Activated naive CD4-positive, alpha-beta T cell treated with anti-CD3 and anti-CD28 coated beads for 36 hours (primary cell): ENCODE measurements at regions of chr3 and their contacts with region 1.

Region 1: DNA sequence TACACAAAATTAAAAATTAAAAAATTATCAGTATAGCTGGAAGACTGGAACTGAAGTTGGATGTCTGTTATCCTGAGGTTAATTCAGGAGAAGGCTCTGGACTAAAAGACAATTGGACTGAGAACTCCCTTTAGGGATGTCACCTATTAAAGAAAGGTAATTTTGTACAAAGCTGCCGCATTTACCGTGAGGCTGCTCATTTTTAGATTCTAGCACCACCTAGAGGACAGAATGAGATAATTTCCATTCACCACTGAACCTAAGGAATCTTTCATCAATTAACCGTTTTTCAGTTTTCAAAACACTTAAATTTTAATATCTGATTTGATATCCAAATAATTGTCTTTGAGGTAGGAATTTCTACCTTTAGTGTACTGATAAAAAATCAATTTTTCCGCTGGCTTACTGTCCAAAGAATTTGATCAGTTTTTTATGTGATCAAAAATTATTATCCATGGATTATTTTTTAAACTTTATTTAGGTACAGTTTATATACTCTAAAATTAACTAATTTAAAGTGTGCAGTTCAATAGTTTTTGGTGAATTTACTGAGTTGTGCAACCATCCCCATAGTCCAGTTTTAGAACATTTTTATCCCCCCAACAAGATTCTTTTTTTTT is 106.7 kb upstream of the TNIK start:
- DNase-seq: no peak
- H3K4me3 Mint-ChIP-seq: no peak overlapping the region
- H3K27ac Mint-ChIP-seq: no peak overlapping the region
- H3K4me1 Mint-ChIP-seq: peaks cover 9% of the 10 kb centered on the region
- H3K27me3 Mint-ChIP-seq: no peaks in the 10 kb centered on the region

Region 2: DNA sequence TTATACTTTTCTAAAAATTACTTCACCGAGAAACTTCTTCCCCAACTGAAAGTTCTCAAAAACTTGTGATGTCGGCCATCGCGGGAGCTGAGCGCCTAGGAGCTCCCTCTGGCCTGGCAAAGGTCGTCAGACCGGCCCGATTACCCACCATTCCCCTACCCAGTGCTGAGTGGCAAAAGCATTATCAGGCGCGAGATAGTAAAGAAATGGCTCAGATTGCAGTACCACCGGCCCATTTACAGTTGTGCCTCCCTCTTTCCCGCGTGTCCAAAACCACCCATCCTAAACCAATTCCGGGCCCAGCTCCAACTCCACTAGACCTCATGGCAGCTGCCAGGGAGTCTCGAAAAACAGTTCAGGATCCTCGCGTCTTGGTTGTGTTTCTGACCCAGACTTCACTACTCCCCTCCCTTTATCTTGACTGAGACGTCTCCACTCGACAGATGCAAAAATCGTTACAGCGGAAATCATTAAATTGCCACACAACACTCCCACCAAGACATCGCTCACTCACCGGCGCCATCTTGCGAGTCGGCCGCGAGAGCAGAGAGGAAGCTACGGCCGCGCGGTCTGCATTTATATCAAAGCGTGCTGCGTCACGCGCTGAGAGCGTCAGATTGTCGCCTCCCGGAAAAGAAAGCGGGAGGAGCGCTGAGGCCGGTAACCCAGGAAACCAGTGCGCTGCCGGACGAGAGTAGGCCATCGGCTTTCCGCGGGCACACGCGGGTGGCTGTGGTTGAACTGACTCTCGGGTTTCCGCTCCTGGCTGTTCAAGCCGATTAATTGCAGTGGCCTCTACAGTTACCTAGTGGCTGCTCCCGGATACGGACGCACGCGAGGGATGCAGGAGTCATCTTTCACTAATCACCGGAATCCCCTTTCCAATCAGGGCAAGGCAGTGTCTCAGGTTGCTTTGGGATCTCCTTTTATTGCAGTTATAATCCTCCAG is 697.0 kb before region 1 on chr3 and contains the start of gene RPL22L1:
- CTCF ChIA-PET with region 1: no interaction called
- intact Hi-C with region 1: loop called (anchors 10 kb)
- DNase-seq: peak; percentile 95
- H3K4me3 Mint-ChIP-seq: peak within 1 kb of the TSS; percentile 94
- H3K27ac Mint-ChIP-seq: peak within 1 kb of the TSS; percentile 98
- H3K4me1 Mint-ChIP-seq: peaks cover 14% of the 10 kb centered on the region
- H3K27me3 Mint-ChIP-seq: no peaks in the 10 kb centered on the region
- total RNA-seq, gene RPL22L1: 480 to 525 TPM

Region 3: GRCh38 chr3:170961616-170962400 is 605.1 kb before region 1 on chr3:
- CTCF ChIA-PET with region 1: interaction called, 3 read pairs
- intact Hi-C with region 1: loop called (anchors 1 kb)
- DNase-seq: peak; percentile 21
- H3K4me3 Mint-ChIP-seq: no peak overlapping the region
- H3K27ac Mint-ChIP-seq: no peak overlapping the region
- H3K4me1 Mint-ChIP-seq: no peaks in the 10 kb centered on the region
- H3K27me3 Mint-ChIP-seq: peaks cover 3% of the 10 kb centered on the region

Region 4: DNA sequence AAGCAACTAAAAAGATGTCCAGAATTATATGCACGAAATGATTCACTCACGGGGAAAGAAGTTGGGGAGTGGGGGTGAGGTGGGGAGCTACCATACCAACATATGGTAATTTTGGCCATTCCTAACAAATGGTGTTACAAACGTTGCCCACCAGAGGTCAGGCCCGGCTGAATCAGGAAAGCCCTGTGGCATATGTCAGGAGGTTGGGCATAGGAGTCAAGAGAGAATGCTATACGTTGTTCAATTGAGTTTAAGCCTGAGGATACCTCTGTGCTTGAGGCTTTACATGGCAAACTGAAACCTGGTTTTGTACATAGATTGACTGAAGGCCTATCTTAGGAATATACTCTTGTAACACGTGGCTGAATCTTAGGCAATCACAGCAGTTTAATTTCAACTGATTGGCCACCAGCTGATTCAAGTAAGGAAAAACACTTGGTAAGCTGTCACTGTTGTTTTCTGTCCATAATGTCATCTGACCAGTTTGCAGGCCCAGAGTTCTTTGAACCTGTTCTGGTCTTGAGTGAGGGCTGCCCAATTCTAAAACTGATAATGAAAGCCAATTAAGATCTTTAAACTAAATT is 517.0 kb before region 1 on chr3:
- CTCF ChIA-PET with region 1: interaction called, 13 read pairs
- intact Hi-C with region 1: loop called (anchors 1 kb)
- DNase-seq: peak; percentile 67
- H3K4me3 Mint-ChIP-seq: no peak overlapping the region
- H3K27ac Mint-ChIP-seq: no peak overlapping the region
- H3K4me1 Mint-ChIP-seq: no peaks in the 10 kb centered on the region
- H3K27me3 Mint-ChIP-seq: peaks cover 3% of the 10 kb centered on the region

Region 5: DNA sequence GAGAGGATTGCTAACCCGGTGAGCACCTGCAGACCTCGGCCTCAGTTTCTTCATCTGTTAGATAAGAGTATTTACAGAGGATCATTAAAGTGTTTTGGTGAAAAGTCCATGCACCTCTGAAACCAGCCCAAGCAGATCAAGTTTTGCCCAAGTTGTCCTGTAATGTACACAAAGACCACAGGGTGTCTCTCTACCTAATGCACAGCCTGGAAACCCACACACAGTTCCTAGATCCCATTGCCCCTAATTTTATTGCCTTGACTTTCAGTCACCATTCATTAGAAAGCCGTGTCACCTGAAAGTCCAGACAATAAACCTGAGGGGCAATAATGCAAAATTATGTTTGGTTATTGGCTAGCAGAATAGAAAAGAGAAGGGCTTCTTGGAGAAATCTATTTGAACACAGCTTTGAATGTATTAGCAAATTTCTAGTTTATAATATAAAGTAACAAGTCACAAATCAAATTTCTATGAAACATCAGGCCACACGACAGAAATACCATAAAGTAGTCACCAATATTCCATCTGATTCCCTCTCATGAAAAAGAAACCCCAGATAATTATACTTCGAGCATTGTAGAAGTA is 379.1 kb before region 1 on chr3:
- CTCF ChIA-PET with region 1: interaction called, 10 read pairs
- intact Hi-C with region 1: loop called (anchors 1 kb)
- DNase-seq: peak; percentile 35
- H3K4me3 Mint-ChIP-seq: no peak overlapping the region
- H3K27ac Mint-ChIP-seq: no peak overlapping the region
- H3K4me1 Mint-ChIP-seq: peaks cover 49% of the 10 kb centered on the region
- H3K27me3 Mint-ChIP-seq: no peaks in the 10 kb centered on the region

Region 6: DNA sequence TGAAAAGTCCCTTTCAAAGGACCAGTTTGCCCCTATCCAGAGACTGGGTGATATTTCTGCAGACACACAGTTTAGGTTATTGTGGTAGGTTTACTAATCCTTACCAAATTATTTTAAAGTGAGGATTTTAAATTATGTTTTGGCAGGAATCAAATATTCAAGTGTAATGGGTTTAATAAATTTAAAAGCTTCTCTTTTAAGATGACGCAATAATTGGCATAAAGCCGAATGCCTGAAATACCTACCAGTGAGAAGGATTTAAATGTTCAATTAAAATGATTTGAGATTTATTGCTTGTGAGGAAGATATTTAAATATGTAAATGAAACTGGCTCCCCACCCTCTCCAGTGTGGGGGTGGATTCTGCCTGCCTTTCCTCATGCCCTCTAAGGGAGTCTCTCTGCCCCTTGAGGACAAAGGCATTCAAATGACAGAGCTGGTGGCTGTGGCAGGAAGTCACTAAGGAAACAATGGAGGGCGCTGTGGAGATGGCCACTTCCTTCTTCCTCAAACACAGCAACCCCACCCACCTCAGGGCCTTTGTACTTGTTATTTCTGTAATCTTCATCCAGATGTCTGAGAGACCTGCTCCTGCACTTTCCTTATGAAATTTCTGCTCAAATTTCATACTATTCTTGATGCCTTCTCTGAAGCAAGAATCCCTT is 238.4 kb before region 1 on chr3:
- CTCF ChIA-PET with region 1: interaction called, 3 read pairs
- intact Hi-C with region 1: loop called (anchors 2 kb)
- DNase-seq: peak; percentile 75
- H3K4me3 Mint-ChIP-seq: no peak overlapping the region
- H3K27ac Mint-ChIP-seq: no peak overlapping the region
- H3K4me1 Mint-ChIP-seq: peaks cover 60% of the 10 kb centered on the region
- H3K27me3 Mint-ChIP-seq: no peaks in the 10 kb centered on the region

Region 7: DNA sequence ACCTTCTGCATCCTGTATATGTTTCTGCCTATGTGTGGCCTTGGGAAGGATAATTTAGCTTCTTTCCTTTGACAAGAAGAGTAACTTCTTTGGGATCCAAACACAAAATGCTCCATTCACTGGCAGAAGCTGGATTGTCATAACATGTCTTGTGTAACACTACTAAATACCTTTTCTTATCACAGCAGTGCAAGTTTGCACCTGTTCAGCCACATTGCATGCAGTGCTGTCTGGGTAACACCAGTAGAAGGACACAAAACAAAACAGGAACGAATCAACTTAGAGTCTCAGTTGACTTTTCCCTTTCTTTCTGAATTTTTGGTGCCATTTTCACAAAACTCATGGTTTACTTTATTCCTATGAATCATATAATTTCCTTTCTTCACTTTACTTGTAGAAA is 63.1 kb before region 1 on chr3:
- CTCF ChIA-PET with region 1: no interaction called
- intact Hi-C with region 1: no loop called
- DNase-seq: no peak
- H3K4me3 Mint-ChIP-seq: no peak overlapping the region
- H3K27ac Mint-ChIP-seq: no peak overlapping the region
- H3K4me1 Mint-ChIP-seq: peaks cover 9% of the 10 kb centered on the region
- H3K27me3 Mint-ChIP-seq: no peaks in the 10 kb centered on the region

Region 8: GRCh38 chr3:172294223-172294806 is 727.4 kb after region 1 on chr3:
- CTCF ChIA-PET with region 1: no interaction called
- intact Hi-C with region 1: no loop called
- DNase-seq: no peak
- H3K4me3 Mint-ChIP-seq: no peak overlapping the region
- H3K27ac Mint-ChIP-seq: no peak overlapping the region
- H3K4me1 Mint-ChIP-seq: no peaks in the 10 kb centered on the region
- H3K27me3 Mint-ChIP-seq: no peaks in the 10 kb centered on the region